ENCODE measurements at regions of chr2 and their contacts with region 1.

Region 1: GRCh38 chr2:74458132-74458925 is at the start of gene WBP1:
- DNase-seq: peak; percentile 99
- ATAC-seq: peak; percentile 88
- H3K4me3 Mint-ChIP-seq: peak within 1 kb of the TSS; percentile 90
- H3K27ac Mint-ChIP-seq: peak within 1 kb of the TSS; percentile 99
- H3K4me1 Mint-ChIP-seq: peaks cover 37% of the 10 kb centered on the region
- H3K27me3 Mint-ChIP-seq: no peaks in the 10 kb centered on the region
- total RNA-seq, gene WBP1: 24.9 to 30.2 TPM

Region 2: DNA sequence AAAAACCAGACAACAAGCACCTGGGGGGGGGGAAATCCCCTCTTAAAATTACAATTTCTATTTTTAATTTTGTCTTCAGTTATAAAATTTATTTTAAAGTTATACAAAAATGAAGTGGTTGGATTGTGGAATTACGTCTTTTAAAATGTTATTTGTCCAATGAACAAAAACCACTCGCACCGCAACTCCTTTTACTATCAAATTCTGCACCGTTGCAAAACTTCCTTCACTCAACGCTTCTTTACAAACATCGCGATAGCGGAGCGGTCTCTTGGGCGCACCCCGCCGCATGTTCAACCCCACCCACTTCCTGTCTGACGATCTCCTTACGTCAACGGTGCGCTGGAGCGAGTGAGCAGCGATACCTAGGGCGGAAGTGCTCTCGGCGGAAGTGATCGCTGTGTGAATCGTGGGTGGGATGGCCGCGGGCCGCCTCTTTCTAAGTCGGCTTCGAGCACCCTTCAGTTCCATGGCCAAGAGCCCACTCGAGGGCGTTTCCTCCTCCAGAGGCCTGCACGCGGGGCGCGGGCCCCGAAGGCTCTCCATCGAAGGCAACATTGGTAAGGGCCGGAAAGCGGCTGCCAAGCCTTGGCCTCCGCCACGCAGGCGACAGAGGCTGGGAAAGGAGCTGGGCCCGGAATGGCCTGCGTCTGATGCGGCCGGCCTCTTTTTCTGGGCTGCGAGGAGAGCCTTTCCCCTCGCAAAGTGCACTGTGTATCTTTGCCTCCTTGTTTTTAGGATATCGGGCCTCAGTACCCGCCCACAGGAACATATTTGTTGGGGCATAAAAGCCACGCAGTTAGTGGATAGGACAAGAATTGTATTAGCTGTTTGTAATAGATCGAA is 531.6 kb before region 1 on chr2 and contains the start of gene DGUOK:
- CTCF ChIA-PET with region 1: no interaction called
- POLR2A ChIA-PET with region 1: no interaction called
- intact Hi-C with region 1: loop called in 1 of 2 experiments (anchors 5 kb)
- DNase-seq: peak; percentile 99
- ATAC-seq: peak; percentile 99
- H3K4me3 Mint-ChIP-seq: peak within 1 kb of the TSS; percentile 87
- H3K27ac Mint-ChIP-seq: peak within 1 kb of the TSS; percentile 96
- H3K4me1 Mint-ChIP-seq: peaks cover 49% of the 10 kb centered on the region
- H3K27me3 Mint-ChIP-seq: no peaks in the 10 kb centered on the region
- total RNA-seq, gene DGUOK: 97.6 to 119 TPM

Region 3: DNA sequence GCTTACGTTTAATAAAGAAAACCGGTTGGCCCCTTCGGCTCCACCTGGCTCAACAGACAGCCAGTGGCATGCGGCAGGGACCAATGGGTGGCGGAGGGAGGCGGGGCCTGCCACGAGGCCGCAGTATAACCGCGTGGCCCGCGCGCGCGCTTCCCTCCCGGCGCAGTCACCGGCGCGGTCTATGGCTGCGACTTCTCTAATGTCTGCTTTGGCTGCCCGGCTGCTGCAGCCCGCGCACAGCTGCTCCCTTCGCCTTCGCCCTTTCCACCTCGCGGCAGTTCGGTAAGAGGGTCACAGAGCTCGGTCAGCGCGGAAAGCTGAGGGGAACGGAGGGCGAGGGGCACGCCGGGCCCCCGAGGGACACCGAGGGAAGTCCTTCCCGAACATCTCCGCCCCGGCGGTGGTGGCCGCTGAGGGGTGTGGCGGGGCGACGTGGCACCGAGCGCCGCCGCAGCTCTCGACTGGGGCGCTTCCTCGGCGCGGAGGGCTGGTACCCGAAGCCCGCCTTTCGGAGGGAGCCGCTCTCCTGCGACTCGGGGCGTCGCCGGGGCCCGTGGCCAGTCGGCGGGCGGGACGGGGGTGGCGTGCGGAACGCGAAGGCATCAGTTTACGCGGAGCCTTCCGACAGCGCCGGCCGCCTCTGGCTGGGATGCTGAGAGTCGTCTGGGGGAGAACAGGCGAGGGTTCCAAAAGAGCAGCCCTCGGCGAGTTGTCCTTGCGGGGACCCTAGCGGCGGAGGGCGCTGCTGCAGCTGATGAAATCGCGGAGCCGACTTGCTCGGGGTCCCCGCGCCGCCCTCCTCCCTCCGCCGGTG is 259.7 kb before region 1 on chr2 and contains the start of gene MTHFD2:
- CTCF ChIA-PET with region 1: interaction called, 3 read pairs
- POLR2A ChIA-PET with region 1: interaction called, 3 read pairs
- intact Hi-C with region 1: loop called in 1 of 2 experiments (anchors 1 kb)
- DNase-seq: peak; percentile 96
- ATAC-seq: peak; percentile 90
- H3K4me3 Mint-ChIP-seq: peak within 1 kb of the TSS; percentile 100
- H3K27ac Mint-ChIP-seq: peak within 1 kb of the TSS; percentile 100
- H3K4me1 Mint-ChIP-seq: peaks cover 40% of the 10 kb centered on the region
- H3K27me3 Mint-ChIP-seq: no peaks in the 10 kb centered on the region
- total RNA-seq, gene MTHFD2: 411 to 453 TPM

Region 4: GRCh38 chr2:74440378-74441169 is 17.8 kb before region 1 on chr2:
- CTCF ChIA-PET with region 1: interaction called, 12 read pairs
- POLR2A ChIA-PET with region 1: interaction called, 5 read pairs
- intact Hi-C with region 1: loop called in 1 of 2 experiments (anchors 1 kb)
- DNase-seq: peak; percentile 77
- ATAC-seq: peak; percentile 94
- H3K4me3 Mint-ChIP-seq: no peak overlapping the region
- H3K27ac Mint-ChIP-seq: no peak overlapping the region
- H3K4me1 Mint-ChIP-seq: peaks cover 10% of the 10 kb centered on the region
- H3K27me3 Mint-ChIP-seq: peaks cover 31% of the 10 kb centered on the region

Region 5: DNA sequence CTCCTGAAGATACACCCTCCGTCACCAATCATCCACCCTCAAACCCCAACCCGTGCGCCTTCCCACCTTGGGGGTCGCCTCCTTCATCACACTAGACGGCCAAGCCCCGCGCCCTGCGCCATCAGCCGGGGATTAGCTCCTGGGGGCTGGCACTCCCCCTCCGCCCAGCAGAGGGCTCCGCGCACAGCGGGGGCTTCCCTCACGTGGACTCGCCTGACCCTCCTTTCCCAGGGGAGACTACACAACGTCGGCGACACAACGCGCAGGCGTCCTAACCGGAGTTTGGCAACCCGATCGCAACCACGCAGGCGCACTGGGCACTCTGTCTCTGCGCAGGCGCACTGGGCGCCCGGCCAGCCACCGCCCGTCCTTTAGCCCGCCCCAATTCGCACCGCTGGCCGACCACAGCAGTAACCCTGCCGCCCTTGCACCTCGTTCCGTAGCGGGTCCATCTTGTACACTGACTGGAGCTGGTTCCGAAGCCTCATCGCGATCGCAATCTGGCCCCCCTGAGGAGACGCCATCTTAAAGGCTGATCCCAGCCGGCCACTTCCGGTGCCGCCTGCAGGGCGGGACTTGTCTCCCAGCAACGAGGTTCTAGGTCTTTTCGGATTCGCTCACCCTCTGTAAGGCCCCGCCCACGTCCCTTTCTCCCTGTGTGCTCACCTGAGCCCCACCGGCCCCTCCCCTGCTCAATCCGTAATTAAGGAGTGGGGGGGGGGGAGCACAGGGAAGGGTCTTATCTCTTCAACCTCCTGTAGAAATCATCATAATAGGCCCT is 49.0 kb after region 1 on chr2 and contains the start of gene PCGF1:
- CTCF ChIA-PET with region 1: interaction called, 3 read pairs
- POLR2A ChIA-PET with region 1: interaction called, 5 read pairs
- intact Hi-C with region 1: loop called (anchors 1 kb)
- DNase-seq: peak; percentile 99
- ATAC-seq: peak; percentile 92
- H3K4me3 Mint-ChIP-seq: peak within 1 kb of the TSS; percentile 93
- H3K27ac Mint-ChIP-seq: peak within 1 kb of the TSS; percentile 99
- H3K4me1 Mint-ChIP-seq: peaks cover 40% of the 10 kb centered on the region
- H3K27me3 Mint-ChIP-seq: peaks cover 38% of the 10 kb centered on the region
- total RNA-seq, gene PCGF1: 21.7 to 28.7 TPM

Region 6: GRCh38 chr2:74587664-74588277 is 129.4 kb after region 1 on chr2:
- CTCF ChIA-PET with region 1: interaction called, 4 read pairs
- POLR2A ChIA-PET with region 1: interaction called, 3 read pairs
- intact Hi-C with region 1: loop called in 1 of 2 experiments (anchors 1 kb)
- DNase-seq: peak; percentile 75
- ATAC-seq: peak; percentile 62
- H3K4me3 Mint-ChIP-seq: no peak overlapping the region
- H3K27ac Mint-ChIP-seq: no peak overlapping the region
- H3K4me1 Mint-ChIP-seq: peaks cover 26% of the 10 kb centered on the region
- H3K27me3 Mint-ChIP-seq: peaks cover 3% of the 10 kb centered on the region

Region 7: DNA sequence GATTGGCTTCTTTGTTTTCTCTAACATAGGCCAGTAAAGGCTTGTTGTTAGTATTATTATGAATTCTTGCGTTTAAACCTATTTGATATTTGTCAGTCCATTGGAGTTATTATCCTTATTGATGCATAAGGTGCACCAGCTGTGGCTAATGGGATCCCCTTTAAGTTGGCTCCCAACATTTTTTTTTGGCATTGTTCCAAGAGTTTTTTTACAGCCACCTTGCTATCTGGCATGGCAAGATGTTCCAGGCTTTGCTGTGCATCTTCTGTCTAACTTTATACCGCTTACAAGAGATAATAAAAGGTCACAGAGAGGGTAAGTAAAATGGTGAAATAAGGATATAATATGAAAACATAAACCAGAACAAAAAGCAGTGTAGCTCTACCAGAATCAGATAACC is 898.5 kb after region 1 on chr2:
- CTCF ChIA-PET with region 1: no interaction called
- POLR2A ChIA-PET with region 1: no interaction called
- intact Hi-C with region 1: no loop called
- DNase-seq: no peak
- ATAC-seq: no peak
- H3K4me3 Mint-ChIP-seq: no peak overlapping the region
- H3K27ac Mint-ChIP-seq: no peak overlapping the region
- H3K4me1 Mint-ChIP-seq: no peaks in the 10 kb centered on the region
- H3K27me3 Mint-ChIP-seq: no peaks in the 10 kb centered on the region

Measured in activated CD4-positive, alpha-beta T cell treated with anti-CD3 and anti-CD28 coated beads for 36 hours (primary cell).